ENCODE measurements at regions of chr7 and their contacts with region 1.

Region 1: GRCh38 chr7:34087892-34088891 is 182.9 kb downstream of the BMPER start:
- DNase-seq: peak; percentile 66

Region 2: GRCh38 chr7:33982425-33982786 is 105.8 kb before region 1 on chr7:
- CTCF ChIA-PET with region 1: interaction called, 37 read pairs
- POLR2A ChIA-PET with region 1: interaction called, 3 read pairs
- DNase-seq: peak; percentile 30

Region 3: DNA sequence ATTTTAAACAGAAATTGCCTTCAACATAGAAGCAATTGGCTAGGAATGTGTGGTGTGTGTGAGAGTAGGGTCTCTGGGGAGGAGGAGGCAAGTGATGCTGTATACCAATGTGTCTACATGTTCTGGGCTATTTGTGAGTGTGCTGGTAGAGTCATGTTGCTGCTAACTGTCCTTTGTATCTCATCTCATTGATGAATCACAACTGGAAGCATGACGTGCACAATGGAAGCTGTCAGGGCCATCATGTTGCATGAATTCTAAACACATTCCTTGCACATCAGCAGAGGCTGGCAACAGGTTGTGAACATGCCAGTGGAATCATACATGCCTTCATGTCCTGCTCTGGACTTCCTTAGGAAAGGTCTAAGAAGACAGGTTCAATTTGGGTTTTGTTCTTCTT is 16.8 kb after region 1 on chr7:
- CTCF ChIA-PET with region 1: no interaction called
- POLR2A ChIA-PET with region 1: no interaction called
- DNase-seq: no peak